Activated CD8-positive, alpha-beta memory T cell treated with anti-CD3 and anti-CD28 coated beads, Interleukin-2, amount 10 ng/mL, durations not matched to agents 7 days and 5 days (primary cell): ENCODE measurements at regions of chr2 and their contacts with region 1.

Region 1: DNA sequence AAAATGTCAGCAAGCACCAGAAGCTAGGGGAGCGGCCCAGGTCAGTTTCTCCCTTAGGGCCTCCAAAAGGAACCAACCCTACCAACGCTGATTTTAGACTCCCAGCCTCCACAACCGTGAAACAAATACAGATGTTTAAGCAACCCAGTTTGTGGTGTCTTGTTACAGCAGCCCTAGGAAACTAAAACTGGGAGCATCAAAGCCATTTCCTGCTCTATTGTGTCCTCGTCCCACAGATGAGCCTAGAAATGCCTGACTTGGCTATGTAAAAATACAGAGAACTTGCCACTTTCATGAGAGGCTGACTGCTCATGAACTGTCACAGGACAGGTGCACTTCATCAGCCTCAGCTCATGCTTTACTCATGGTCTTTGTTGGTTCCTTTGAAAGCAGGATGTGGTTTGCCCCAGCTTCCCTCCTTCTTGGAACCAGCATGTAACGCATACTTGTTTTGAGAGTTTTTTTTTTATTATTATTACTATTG is 97.6 kb upstream of the SLC39A10 start:
- DNase-seq: peak; percentile 96
- ATAC-seq: peak; percentile 79
- H3K4me3 Mint-ChIP-seq: peak overlapping the region; percentile 63
- H3K27ac Mint-ChIP-seq: peak overlapping the region; percentile 94
- H3K4me1 Mint-ChIP-seq: peaks cover 61% of the 10 kb centered on the region
- H3K27me3 Mint-ChIP-seq: no peaks in the 10 kb centered on the region

Region 2: DNA sequence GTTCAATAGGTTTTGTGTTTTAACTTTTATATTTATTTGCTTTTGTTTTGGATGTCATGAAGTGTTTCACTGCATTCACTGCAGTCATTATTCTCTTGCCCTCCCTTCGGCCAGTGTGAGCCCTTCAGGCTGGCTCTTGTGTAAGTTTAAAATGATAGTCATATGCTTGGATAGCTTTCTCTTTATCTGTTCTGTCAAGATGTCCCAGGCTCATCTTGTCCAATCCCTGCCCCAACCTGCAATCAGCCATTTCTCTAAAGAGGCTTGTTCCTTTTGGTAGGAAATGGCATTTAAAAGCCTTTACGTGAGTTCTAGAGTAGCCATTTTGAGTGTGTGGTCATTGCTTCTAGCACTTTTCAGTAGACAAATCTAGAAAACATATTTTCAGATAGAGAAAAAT is 140.4 kb before region 1 on chr2:
- CTCF ChIA-PET with region 1: no interaction called
- DNase-seq: no peak
- ATAC-seq: no peak
- H3K4me3 Mint-ChIP-seq: no peak overlapping the region
- H3K27ac Mint-ChIP-seq: no peak overlapping the region
- H3K4me1 Mint-ChIP-seq: no peaks in the 10 kb centered on the region
- H3K27me3 Mint-ChIP-seq: no peaks in the 10 kb centered on the region

Region 3: GRCh38 chr2:195498176-195498575 is 61.3 kb before region 1 on chr2:
- CTCF ChIA-PET with region 1: interaction called, 10 read pairs
- DNase-seq: peak; percentile 71
- ATAC-seq: peak; percentile 61
- H3K4me3 Mint-ChIP-seq: no peak overlapping the region
- H3K27ac Mint-ChIP-seq: no peak overlapping the region
- H3K4me1 Mint-ChIP-seq: peaks cover 24% of the 10 kb centered on the region
- H3K27me3 Mint-ChIP-seq: no peaks in the 10 kb centered on the region

Region 4: GRCh38 chr2:195533771-195534642 is 25.5 kb before region 1 on chr2:
- CTCF ChIA-PET with region 1: interaction called, 59 read pairs
- DNase-seq: peak; percentile 88
- ATAC-seq: peak; percentile 63
- H3K4me3 Mint-ChIP-seq: peak overlapping the region; percentile 77
- H3K27ac Mint-ChIP-seq: peak overlapping the region; percentile 96
- H3K4me1 Mint-ChIP-seq: peaks cover 73% of the 10 kb centered on the region
- H3K27me3 Mint-ChIP-seq: no peaks in the 10 kb centered on the region

Region 5: DNA sequence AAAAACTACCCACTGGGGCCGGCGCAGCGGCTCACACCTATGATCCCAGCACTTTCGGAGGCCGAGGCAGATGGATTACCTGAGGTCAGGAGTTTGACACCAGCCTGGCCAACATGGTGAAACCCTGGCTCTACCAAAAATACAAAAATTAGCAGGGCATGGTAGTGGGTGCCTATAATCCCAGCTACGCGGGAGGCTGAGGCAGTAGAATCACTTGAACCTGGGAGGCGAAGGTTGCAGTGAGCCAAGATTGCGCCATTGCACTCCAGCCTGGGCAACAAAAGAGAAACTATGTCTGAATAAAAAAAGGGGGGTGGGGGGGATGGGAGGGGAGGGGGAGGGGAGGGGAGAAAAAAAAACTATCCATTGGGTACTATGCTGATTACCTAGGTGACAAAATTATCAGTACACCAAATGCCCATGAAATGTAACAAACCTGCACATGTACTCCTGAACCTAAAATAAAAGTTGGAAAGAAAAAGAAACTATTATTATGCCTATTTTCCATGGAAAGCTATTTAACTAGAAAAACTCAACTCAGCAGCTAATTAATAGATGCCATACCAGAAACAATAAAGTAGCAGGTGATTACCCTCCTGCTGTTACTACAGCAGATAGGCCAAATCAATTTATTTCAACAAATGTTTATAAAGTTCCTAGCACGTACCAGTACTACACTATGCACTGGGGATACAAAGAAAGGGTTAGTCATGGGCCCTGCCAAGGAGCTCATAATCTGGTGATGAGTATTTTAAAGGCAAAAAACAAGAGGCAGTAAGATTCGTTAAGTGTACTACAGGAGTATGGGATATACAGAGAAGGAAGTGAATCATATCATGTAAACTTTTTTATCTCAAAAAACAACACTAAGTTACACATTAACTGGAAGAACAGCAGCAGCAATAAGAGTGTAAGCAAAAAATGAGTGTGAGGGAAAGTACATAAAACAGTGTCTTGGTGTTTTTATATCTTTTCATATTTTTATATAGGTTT is 15.3 kb before region 1 on chr2:
- CTCF ChIA-PET with region 1: interaction called, 25 read pairs
- DNase-seq: no peak
- ATAC-seq: peak; percentile 84
- H3K4me3 Mint-ChIP-seq: peak overlapping the region; percentile 2
- H3K27ac Mint-ChIP-seq: peak overlapping the region; percentile 90
- H3K4me1 Mint-ChIP-seq: peaks cover 55% of the 10 kb centered on the region
- H3K27me3 Mint-ChIP-seq: no peaks in the 10 kb centered on the region

Region 6: GRCh38 chr2:195575879-195576401 is 16.5 kb after region 1 on chr2:
- CTCF ChIA-PET with region 1: interaction called, 14 read pairs
- DNase-seq: no peak
- ATAC-seq: peak; percentile 53
- H3K4me3 Mint-ChIP-seq: no peak overlapping the region
- H3K27ac Mint-ChIP-seq: peak overlapping the region; percentile 40
- H3K4me1 Mint-ChIP-seq: peaks cover 31% of the 10 kb centered on the region
- H3K27me3 Mint-ChIP-seq: no peaks in the 10 kb centered on the region